Activated CD4-positive, alpha-beta T cell treated with anti-CD3 and anti-CD28 coated beads for 36 hours (primary cell): ENCODE measurements at regions of chr9 and their contacts with region 1.

Region 1: DNA sequence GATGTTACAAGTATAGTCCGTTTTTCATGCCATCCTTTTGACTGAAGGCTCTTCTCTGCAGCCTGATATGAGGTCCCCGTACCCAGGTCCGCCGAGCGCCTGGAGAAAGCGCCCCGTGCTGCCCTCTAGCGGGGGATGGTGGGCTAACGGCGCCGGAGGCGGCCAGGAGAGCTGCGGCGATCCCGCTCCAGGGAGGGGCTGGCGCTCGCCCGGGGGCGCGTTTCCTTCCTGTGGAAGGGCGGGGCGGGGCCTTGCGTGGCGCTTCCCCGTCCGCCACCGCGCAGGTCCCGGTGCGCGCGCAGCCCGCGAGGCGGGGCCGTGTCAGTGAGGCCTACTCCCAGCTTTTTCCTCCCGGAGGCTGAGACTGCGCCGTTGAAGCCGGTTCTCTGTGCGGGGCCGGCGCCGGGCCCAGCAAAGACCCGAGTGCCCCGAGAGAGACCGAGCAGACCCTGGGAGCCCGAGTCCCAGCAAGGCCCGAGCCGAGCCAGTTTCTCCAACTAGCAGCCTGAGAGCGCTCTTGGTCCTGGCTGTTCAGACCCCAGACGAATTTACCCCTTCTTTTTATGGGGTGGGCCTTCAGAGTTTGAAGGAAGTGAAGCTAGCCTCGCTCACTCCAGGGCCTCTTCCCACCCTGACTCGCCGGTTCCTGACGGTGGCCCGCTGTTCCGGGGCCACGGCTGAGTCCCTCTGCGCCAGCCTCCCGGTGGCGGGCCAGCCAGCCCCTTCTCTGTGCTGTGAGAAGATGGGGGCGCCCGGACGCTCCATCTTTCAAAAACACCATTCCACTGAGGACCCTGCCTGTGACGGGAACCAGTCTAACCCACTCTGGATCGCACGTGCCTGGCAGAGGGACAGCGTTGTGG is 9.7 kb upstream of the PHF2 start:
- DNase-seq: peak; percentile 99
- ATAC-seq: peak; percentile 98
- H3K4me3 Mint-ChIP-seq: peak overlapping the region; percentile 83
- H3K27ac Mint-ChIP-seq: peak overlapping the region; percentile 89
- H3K4me1 Mint-ChIP-seq: peaks cover 24% of the 10 kb centered on the region
- H3K27me3 Mint-ChIP-seq: no peaks in the 10 kb centered on the region

Region 2: GRCh38 chr9:92877531-92878430 is 688.9 kb before region 1 on chr9 and contains the start of gene ZNF484:
- CTCF ChIA-PET with region 1: no interaction called
- POLR2A ChIA-PET with region 1: no interaction called
- intact Hi-C with region 1: loop called in 1 of 2 experiments (anchors 5 kb)
- DNase-seq: peak; percentile 98
- ATAC-seq: peak; percentile 97
- H3K4me3 Mint-ChIP-seq: peak within 1 kb of the TSS; percentile 99
- H3K27ac Mint-ChIP-seq: peak within 1 kb of the TSS; percentile 97
- H3K4me1 Mint-ChIP-seq: peaks cover 46% of the 10 kb centered on the region
- H3K27me3 Mint-ChIP-seq: no peaks in the 10 kb centered on the region
- total RNA-seq, gene ZNF484: 7.2 to 9.8 TPM

Region 3: GRCh38 chr9:93064392-93065134 is 502.1 kb before region 1 on chr9:
- CTCF ChIA-PET with region 1: interaction called, 3 read pairs
- POLR2A ChIA-PET with region 1: no interaction called
- intact Hi-C with region 1: loop called in 1 of 2 experiments (anchors 5 kb)
- DNase-seq: peak; percentile 96
- ATAC-seq: peak; percentile 90
- H3K4me3 Mint-ChIP-seq: peak overlapping the region; percentile 76
- H3K27ac Mint-ChIP-seq: peak overlapping the region; percentile 98
- H3K4me1 Mint-ChIP-seq: peaks cover 94% of the 10 kb centered on the region
- H3K27me3 Mint-ChIP-seq: no peaks in the 10 kb centered on the region

Region 4: GRCh38 chr9:93154315-93154903 is 412.2 kb before region 1 on chr9:
- CTCF ChIA-PET with region 1: interaction called, 4 read pairs
- POLR2A ChIA-PET with region 1: no interaction called
- intact Hi-C with region 1: loop called in 1 of 2 experiments (anchors 1 kb)
- DNase-seq: peak; percentile 76
- ATAC-seq: peak; percentile 24
- H3K4me3 Mint-ChIP-seq: no peak overlapping the region
- H3K27ac Mint-ChIP-seq: no peak overlapping the region
- H3K4me1 Mint-ChIP-seq: peaks cover 28% of the 10 kb centered on the region
- H3K27me3 Mint-ChIP-seq: no peaks in the 10 kb centered on the region

Region 5: GRCh38 chr9:93183609-93184431 is 382.8 kb before region 1 on chr9 and contains the start of gene WNK2:
- CTCF ChIA-PET with region 1: no interaction called
- POLR2A ChIA-PET with region 1: no interaction called
- intact Hi-C with region 1: loop called in 1 of 2 experiments (anchors 1 kb)
- DNase-seq: peak; percentile 56
- ATAC-seq: peak; percentile 80
- H3K4me3 Mint-ChIP-seq: peak within 1 kb of the TSS; percentile 63
- H3K27ac Mint-ChIP-seq: no peak within 1 kb of the TSS
- H3K4me1 Mint-ChIP-seq: peaks cover 9% of the 10 kb centered on the region
- H3K27me3 Mint-ChIP-seq: peaks cover 24% of the 10 kb centered on the region
- total RNA-seq, gene WNK2: 3.3 to 4.6 TPM

Region 6: DNA sequence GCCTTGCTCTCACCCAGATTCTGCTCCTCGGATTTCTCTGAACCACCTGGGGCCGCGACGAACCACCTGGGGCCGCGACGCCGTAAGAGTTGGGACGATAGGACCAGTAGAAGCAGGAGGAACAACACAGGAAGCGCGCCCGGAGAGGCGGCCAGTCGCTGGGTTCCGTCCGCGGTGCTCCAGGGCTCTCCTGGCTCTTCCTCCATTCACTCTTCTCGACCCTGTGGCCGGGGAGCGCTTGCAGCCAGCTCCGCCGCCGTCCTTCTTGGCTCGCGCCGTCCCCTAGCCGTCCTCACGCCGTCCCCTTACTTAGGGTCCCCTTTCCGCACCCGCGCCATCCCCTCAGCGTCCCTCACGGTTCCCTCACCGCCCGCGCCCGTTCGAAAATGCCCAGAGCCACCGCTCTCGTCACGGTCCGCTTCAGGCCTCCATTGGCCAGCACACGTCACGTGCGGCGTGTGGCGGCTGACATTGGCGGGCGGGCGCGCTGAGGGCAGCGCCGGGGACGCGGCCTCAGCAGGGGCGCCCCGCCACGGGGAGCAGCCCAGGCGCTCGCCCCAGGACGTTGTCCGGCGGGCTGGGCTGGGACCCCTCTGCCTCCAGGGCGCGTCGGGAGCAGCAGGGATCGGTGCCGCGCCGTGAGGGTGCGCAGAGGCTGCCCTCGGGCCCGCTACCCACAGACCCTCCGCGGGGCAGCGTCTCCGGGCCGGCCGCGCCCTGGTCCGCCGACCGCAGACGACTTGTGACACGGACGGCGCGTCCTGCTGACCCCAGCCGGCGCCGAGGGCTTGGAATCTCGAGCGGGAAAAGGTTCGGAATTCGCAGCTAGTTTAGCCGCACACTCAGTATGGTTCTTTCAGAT is 463.9 kb after region 1 on chr9:
- CTCF ChIA-PET with region 1: interaction called, 3 read pairs
- POLR2A ChIA-PET with region 1: no interaction called
- intact Hi-C with region 1: loop called in 1 of 2 experiments (anchors 2 kb)
- DNase-seq: peak; percentile 89
- ATAC-seq: peak; percentile 100
- H3K4me3 Mint-ChIP-seq: peak overlapping the region; percentile 98
- H3K27ac Mint-ChIP-seq: peak overlapping the region; percentile 96
- H3K4me1 Mint-ChIP-seq: peaks cover 15% of the 10 kb centered on the region
- H3K27me3 Mint-ChIP-seq: peaks cover 3% of the 10 kb centered on the region

Region 7: GRCh38 chr9:94259077-94259892 is 692.6 kb after region 1 on chr9 and contains the start of gene ZNF169:
- CTCF ChIA-PET with region 1: no interaction called
- POLR2A ChIA-PET with region 1: no interaction called
- intact Hi-C with region 1: loop called in 1 of 2 experiments (anchors 5 kb)
- DNase-seq: peak; percentile 96
- ATAC-seq: peak; percentile 100
- H3K4me3 Mint-ChIP-seq: peak within 1 kb of the TSS; percentile 96
- H3K27ac Mint-ChIP-seq: peak within 1 kb of the TSS; percentile 98
- H3K4me1 Mint-ChIP-seq: peaks cover 28% of the 10 kb centered on the region
- H3K27me3 Mint-ChIP-seq: peaks cover 6% of the 10 kb centered on the region
- total RNA-seq, gene ZNF169: 6.4 to 6.7 TPM